Transverse colon (tissue), 4 donors: ENCODE measurements at regions of chr5 and their contacts with region 1.

Region 1: DNA sequence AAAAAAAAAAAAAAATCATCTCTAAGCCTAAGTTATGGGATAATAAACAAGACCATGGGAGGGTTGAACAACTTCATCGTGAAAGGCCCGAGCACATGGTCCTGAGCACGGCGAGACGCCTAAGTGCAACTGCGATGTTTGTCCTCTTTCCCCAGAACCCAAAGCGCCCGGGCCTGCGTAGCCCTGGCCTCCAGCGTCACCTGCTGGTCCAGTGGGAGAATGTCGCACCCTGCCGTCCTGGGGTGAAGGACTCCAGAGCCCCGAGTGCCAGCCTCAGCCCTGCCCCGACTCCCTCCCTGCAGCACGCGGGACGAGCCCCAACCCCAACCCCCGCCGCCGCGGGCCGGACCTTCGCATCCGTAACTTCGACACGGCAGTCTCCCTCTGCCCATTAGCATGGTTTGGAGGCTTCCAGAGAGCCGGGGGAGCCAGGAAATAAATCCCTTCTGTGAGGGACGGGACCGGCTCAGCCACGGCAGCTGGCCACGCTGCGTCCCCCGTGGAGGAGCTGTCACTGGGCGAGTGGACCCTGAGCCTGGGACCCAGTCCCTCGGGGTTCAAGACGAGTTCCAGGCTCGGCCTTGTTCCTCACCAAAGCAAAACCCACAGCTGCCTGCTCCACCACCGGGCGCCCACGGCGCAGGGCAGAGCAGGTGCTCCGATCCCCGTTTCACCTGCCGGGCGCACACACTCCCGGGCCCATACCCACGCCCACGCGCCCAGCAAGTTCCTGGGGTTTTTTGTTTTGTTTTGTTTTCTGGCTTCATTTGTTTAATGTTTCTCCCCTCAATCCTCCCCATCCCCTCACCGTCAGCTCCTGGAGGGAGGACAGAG is 132.5 kb upstream of the HAND1 start:
- DNase-seq: peak; percentile 75
- H3K4me3 ChIP-seq: peak overlapping the region in 3 of 4 donors; percentile 0 to 38 (median 32)
- H3K27ac ChIP-seq: no peak overlapping the region
- H3K4me1 ChIP-seq: peaks cover 9 to 17% (median 14%) of the 10 kb centered on the region in 4 donors
- H3K27me3 ChIP-seq: peaks cover 69% of the 10 kb centered on the region
- CTCF ChIP-seq: peak; percentile 78 to 87 (median 84)
- EP300 ChIP-seq: no peak
- POLR2A ChIP-seq: no peak

Region 2: GRCh38 chr5:153496835-153497234 is 1113.7 kb before region 1 on chr5:
- in situ Hi-C with region 1: no loop called
- intact Hi-C with region 1: no loop called
- DNase-seq: no peak
- H3K4me3 ChIP-seq: no peak overlapping the region
- H3K27ac ChIP-seq: no peak overlapping the region
- H3K4me1 ChIP-seq: no peaks in the 10 kb centered on the region
- H3K27me3 ChIP-seq: peaks cover 5% of the 10 kb centered on the region
- CTCF ChIP-seq: peak in 4 of 5 experiments; percentile 14 to 40 (median 35)
- EP300 ChIP-seq: no peak
- POLR2A ChIP-seq: no peak

Region 3: GRCh38 chr5:153974813-153975163 is 635.8 kb before region 1 on chr5:
- in situ Hi-C with region 1: loop called in 3 of 4 experiments (anchors 25 kb)
- intact Hi-C with region 1: no loop called
- DNase-seq: no peak
- H3K4me3 ChIP-seq: no peak overlapping the region
- H3K27ac ChIP-seq: no peak overlapping the region
- H3K4me1 ChIP-seq: no peaks in the 10 kb centered on the region
- H3K27me3 ChIP-seq: no peaks in the 10 kb centered on the region
- CTCF ChIP-seq: no peak
- EP300 ChIP-seq: no peak
- POLR2A ChIP-seq: no peak

Region 4: GRCh38 chr5:154541553-154541952 is 69.0 kb before region 1 on chr5:
- in situ Hi-C with region 1: no loop called
- intact Hi-C with region 1: loop called (anchors 5 kb)
- DNase-seq: no peak
- H3K4me3 ChIP-seq: no peak overlapping the region
- H3K27ac ChIP-seq: peak overlapping the region in 3 of 4 donors; percentile 59 to 81 (median 69)
- H3K4me1 ChIP-seq: peaks cover 0 to 11% (median 6%) of the 10 kb centered on the region in 4 donors
- H3K27me3 ChIP-seq: peaks cover 3% of the 10 kb centered on the region
- CTCF ChIP-seq: peak in 2 of 5 experiments; percentile 11 to 21
- EP300 ChIP-seq: no peak
- POLR2A ChIP-seq: no peak